ENCODE measurements at regions of chr19 and their contacts with region 1.

Region 1: GRCh38 chr19:57320180-57321084 is at the start of gene ZNF543:
- DNase-seq: peak; percentile 94 to 95
- ATAC-seq: peak; percentile 95 to 96
- H3K4me3 ChIP-seq: peak within 1 kb of the TSS; percentile 65 to 99 (median 91)
- H3K27ac ChIP-seq: peak within 1 kb of the TSS; percentile 87 to 98 (median 91)
- H3K4me1 ChIP-seq: peaks cover 18 to 19% of the 10 kb centered on the region in 2 donors
- H3K27me3 ChIP-seq: no peaks in the 10 kb centered on the region
- CTCF ChIP-seq: no peak
- POLR2A ChIP-seq: peak; percentile 78 to 87
- total RNA-seq, gene ZNF543: 5.8 to 11.5 (median 8.3) TPM

Region 2: GRCh38 chr19:57302020-57302465 is 18.4 kb before region 1 on chr19:
- in situ Hi-C with region 1: no loop called
- intact Hi-C with region 1: loop called (anchors 2 kb)
- DNase-seq: peak; percentile 81 to 91
- ATAC-seq: peak; percentile 99 to 100
- H3K4me3 ChIP-seq: no peak overlapping the region
- H3K27ac ChIP-seq: peak overlapping the region; percentile 77 to 83 (median 80)
- H3K4me1 ChIP-seq: peaks cover 23 to 30% of the 10 kb centered on the region in 2 donors
- H3K27me3 ChIP-seq: no peaks in the 10 kb centered on the region
- CTCF ChIP-seq: no peak
- POLR2A ChIP-seq: no peak

Region 3: GRCh38 chr19:57338877-57339276 is 18.4 kb after region 1 on chr19:
- in situ Hi-C with region 1: no loop called
- intact Hi-C with region 1: loop called (anchors 2 kb)
- DNase-seq: peak in 1 of 2 donors; percentile 37
- ATAC-seq: peak; percentile 87 to 97
- H3K4me3 ChIP-seq: peak overlapping the region in 1 of 4 donors; percentile 17
- H3K27ac ChIP-seq: peak overlapping the region; percentile 72 to 79 (median 76)
- H3K4me1 ChIP-seq: peaks cover 8 to 23% of the 10 kb centered on the region in 2 donors
- H3K27me3 ChIP-seq: no peaks in the 10 kb centered on the region
- CTCF ChIP-seq: no peak
- POLR2A ChIP-seq: no peak